ENCODE measurements at regions of chr7 and their contacts with region 1.

Region 1: GRCh38 chr7:113159746-113160339 is 41.5 kb upstream of the SMIM30 start:
- DNase-seq: peak; percentile 41
- ATAC-seq: peak; percentile 99
- H3K4me3 Mint-ChIP-seq: no peak overlapping the region
- H3K27ac Mint-ChIP-seq: no peak overlapping the region
- H3K4me1 Mint-ChIP-seq: no peaks in the 10 kb centered on the region
- H3K27me3 Mint-ChIP-seq: peaks cover 2% of the 10 kb centered on the region; the same call in 1 of the 2 replicates
- CTCF ChIP-seq: peak; percentile 55; the same call in 1 of the 2 replicates

Region 2: DNA sequence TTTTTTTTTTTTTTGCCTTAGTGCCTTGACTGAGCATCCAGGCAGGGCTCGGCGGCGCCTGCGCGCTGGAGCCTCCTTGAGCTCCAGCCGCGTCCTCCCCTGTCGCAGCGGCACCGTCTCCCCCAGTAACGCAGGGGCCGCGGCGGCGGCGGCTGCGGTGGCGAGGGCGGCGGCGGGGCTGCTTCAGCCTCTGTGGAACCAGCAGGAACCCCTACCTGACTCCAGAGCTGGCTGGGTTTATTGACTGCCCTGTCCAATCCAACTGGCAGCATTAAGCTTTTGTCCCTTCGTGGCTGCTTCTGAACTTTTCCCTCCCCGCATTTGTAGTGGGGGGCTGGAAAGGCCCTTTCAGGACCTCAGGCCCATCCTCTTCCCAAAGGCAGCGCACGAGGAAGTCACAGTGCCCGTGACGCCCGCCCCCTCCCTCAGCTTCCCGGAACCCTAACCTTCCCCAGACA is 73.4 kb before region 1 on chr7 and contains the start of gene GPR85:
- CTCF ChIA-PET with region 1: interaction called, 10 read pairs
- POLR2A ChIA-PET with region 1: no interaction called
- DNase-seq: peak; percentile 73
- ATAC-seq: peak; percentile 98
- H3K4me3 Mint-ChIP-seq: peak within 1 kb of the TSS; percentile 76
- H3K27ac Mint-ChIP-seq: no peak within 1 kb of the TSS
- H3K4me1 Mint-ChIP-seq: peaks cover 18% of the 10 kb centered on the region
- H3K27me3 Mint-ChIP-seq: peaks cover 53% of the 10 kb centered on the region
- CTCF ChIP-seq: no peak
- total RNA-seq, gene GPR85: 0.09 to 0.34 TPM (median 0.09 TPM) in 3 replicates

Region 3: GRCh38 chr7:113113913-113114312 is 45.9 kb before region 1 on chr7:
- CTCF ChIA-PET with region 1: no interaction called
- POLR2A ChIA-PET with region 1: no interaction called
- DNase-seq: peak; percentile 12
- ATAC-seq: peak; percentile 63
- H3K4me3 Mint-ChIP-seq: no peak overlapping the region
- H3K27ac Mint-ChIP-seq: no peak overlapping the region
- H3K4me1 Mint-ChIP-seq: peaks cover 12% of the 10 kb centered on the region
- H3K27me3 Mint-ChIP-seq: peaks cover 5% of the 10 kb centered on the region
- CTCF ChIP-seq: no peak

Region 4: DNA sequence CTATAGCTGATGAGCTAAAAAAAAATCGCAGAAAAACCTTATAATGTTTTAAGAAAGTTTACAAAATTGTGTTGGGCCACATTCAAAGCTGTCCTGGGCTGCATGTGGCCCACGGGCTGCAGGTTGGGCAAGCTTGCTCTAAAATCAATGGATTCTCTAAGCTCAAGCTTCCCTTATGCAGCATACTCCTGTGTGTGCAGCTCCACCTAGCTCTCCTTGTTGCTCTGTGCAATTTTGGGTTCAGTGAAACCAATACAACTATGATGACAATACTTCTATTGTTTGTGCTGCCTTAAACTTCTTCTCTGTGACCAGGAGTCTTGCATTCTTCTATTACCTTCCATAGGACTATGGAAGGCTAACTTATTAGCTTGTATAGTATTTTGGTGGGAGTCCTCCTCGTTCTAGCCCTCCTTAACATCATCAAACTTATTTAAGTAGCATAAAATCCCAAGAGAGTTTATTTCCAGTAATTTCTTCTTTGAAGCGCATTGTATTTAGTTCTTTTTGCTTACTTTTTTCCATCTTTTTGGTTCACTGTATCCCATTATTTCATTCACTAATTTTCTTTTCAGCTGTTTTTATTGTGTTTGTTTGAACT is 129.4 kb after region 1 on chr7:
- CTCF ChIA-PET with region 1: interaction called, 26 read pairs
- POLR2A ChIA-PET with region 1: no interaction called
- DNase-seq: no peak
- ATAC-seq: peak; percentile 93
- H3K4me3 Mint-ChIP-seq: no peak overlapping the region
- H3K27ac Mint-ChIP-seq: no peak overlapping the region
- H3K4me1 Mint-ChIP-seq: no peaks in the 10 kb centered on the region
- H3K27me3 Mint-ChIP-seq: no peaks in the 10 kb centered on the region; the same call in 1 of the 2 replicates
- CTCF ChIP-seq: no peak

Region 5: DNA sequence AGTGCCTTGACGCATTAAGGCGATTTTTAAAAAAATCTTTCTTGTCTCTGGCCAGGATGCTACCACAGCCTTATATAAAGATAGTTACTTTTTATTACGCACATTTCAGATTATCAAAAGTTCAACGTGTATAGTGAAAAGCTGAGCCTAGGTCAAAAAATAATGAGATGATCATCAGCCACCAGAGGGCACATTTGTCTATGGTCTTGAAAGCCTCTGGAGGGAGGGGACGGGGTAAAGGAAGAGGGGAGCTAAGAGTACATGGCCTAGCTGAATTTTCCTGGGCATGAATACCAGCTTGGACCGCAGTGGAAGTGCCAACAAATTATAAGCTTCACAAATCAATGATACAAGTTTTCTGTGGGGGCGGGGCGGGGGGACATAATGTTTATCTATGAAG is 244.4 kb after region 1 on chr7:
- CTCF ChIA-PET with region 1: interaction called, 14 read pairs
- POLR2A ChIA-PET with region 1: no interaction called
- DNase-seq: peak; percentile 24
- ATAC-seq: peak; percentile 93
- H3K4me3 Mint-ChIP-seq: no peak overlapping the region
- H3K27ac Mint-ChIP-seq: no peak overlapping the region
- H3K4me1 Mint-ChIP-seq: peaks cover 16% of the 10 kb centered on the region
- H3K27me3 Mint-ChIP-seq: no peaks in the 10 kb centered on the region
- CTCF ChIP-seq: peak; percentile 23; the same call in 1 of the 2 replicates

Region 6: GRCh38 chr7:113421696-113422330 is 262.0 kb after region 1 on chr7:
- CTCF ChIA-PET with region 1: interaction called, 16 read pairs
- POLR2A ChIA-PET with region 1: no interaction called
- DNase-seq: peak; percentile 84
- ATAC-seq: peak; percentile 97
- H3K4me3 Mint-ChIP-seq: no peak overlapping the region
- H3K27ac Mint-ChIP-seq: no peak overlapping the region
- H3K4me1 Mint-ChIP-seq: peaks cover 11% of the 10 kb centered on the region
- H3K27me3 Mint-ChIP-seq: no peaks in the 10 kb centered on the region
- CTCF ChIP-seq: peak; percentile 67

Measured in WTC11 (cell line).